Right ventricle myocardium inferior (tissue), 1 donor: ENCODE measurements at regions of chr18 and their contacts with region 1.

Region 1: DNA sequence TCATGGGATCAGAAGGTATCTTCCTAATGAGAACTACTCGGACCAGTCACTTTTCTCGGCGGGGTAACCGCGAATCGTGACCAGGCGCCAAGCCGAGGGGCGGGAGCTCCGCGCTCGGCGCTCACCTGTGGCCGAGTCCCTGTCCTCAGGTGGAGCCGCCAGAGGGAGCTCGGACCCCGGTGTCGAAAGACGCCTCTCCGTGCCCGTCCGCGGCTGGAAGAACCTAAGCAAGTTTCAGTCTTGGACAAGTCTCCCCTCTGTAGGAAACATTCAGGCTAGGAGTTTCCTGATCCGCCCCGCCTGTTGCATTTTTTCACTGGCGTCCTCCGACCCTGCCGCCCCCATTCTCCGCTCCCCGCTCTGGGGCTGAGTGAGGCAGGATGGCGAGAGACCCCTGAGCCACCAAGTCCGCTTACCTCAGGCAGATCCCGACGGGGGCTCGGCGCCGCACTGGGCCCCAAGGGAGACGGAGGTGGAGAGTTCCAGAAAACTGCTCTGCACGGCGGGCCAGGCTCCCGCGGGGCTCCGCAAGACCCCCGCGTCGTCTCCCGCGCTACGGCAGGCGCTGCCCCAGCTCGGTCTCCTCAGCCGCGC is 478 bp downstream of the DSEL start:
- DNase-seq: peak; percentile 88
- ATAC-seq: peak; percentile 69

Region 2: GRCh38 chr18:67432806-67433205 is 83.2 kb before region 1 on chr18:
- intact Hi-C with region 1: no loop called
- DNase-seq: no peak
- ATAC-seq: no peak

Region 3: DNA sequence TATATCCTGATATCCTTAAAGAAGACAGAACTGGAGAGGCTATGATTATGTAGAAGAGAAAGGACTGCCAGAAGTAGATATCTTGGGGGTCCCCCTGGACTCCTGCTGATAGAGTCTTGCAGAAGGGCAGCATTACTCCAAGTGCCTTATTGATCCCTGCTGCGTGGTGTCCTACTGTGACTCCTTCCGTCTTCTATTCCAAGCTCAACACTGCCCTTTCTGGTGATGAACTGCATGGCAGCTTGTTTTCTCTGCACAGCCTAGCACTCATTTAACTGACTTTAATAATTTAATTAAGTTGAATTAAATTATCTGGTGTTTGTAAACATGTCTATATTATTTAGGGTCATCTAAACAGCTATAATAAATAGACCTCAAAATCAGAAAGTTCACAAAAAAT is 194.6 kb after region 1 on chr18:
- intact Hi-C with region 1: no loop called
- DNase-seq: no peak
- ATAC-seq: no peak

Region 4: DNA sequence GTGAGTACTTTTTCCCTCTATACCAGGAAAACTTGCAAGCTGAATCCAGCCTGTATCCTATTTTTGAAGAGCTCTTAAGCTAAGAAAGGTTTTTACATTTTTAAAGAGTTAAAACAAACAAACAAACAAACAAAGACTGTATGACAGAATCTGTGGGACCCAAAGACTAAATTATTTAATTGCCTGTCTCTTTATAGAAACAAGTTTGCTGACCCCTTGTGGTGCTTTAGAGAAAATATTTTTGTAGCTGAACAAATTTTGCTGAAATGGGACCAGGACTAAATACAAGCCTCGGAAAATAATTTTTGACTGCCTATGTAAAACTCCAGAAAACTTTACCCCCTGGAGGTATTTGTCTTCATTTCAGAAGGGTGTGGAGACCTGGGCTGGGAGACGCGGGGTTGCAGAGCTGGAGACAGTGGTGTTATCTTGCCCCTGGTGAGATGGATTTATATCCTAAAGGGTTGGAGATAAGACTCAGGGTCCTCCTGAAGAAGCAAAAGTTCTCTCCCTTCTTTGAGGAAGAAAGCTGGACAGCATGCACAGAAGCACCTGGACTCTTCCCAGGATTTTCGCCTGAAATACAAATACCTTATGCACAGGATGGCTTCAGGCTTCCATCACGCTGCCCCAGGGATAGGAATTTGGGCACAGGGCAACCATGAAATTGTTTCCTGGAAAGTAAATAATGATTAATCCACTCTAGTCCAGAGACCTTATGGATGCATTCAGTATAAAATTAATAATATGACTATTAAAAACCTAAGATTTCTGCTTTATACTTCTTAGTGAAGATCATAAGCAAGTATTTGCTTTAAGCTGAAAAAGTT is 1144.5 kb after region 1 on chr18:
- intact Hi-C with region 1: loop called (anchors 2 kb)
- DNase-seq: no peak
- ATAC-seq: no peak